ENCODE measurements at regions of chr11 and their contacts with region 1.

Region 1: DNA sequence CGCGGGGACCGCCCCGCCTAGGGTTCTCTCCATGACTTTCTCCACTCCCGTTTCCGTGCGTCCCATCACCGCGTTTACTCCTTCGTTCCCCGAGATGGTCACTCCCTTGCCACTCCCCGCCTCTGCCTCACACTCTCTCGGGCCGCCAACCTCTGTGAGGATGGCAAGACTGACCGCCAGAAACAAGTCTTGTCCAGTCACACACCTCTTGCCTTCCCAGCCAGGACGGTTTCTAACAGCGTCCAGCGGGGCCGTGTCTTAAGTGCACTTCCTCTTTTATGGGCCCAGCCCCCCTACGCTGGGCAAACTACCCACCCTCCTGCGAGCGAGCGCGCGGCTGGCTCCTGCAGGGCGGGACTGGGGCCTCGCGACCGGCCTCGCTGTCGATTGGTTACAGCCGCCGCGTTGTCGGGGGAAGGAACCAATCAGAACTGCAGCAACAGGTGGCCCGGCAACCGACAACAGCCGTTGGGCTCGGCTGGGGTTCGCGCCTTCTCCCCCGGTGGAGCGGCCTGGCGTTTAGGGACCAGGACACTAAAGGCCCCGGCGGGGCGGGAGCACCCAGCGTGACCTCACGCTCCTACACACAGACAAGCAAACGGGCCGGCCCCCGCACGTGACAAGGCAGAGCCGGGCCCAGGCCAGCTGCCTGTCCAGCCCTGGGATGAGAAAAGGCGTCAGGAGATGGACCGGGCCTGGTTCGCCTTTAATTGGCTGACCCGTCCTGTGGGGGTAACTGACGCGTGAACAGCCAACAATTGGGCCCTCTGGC is 512 bp upstream of the UCP2 start:
- DNase-seq: peak; percentile 89 to 97 (median 95)

Region 2: GRCh38 chr11:73743045-73743444 is 240.1 kb before region 1 on chr11:
- intact Hi-C with region 1: no loop called
- DNase-seq: no peak

Region 3: DNA sequence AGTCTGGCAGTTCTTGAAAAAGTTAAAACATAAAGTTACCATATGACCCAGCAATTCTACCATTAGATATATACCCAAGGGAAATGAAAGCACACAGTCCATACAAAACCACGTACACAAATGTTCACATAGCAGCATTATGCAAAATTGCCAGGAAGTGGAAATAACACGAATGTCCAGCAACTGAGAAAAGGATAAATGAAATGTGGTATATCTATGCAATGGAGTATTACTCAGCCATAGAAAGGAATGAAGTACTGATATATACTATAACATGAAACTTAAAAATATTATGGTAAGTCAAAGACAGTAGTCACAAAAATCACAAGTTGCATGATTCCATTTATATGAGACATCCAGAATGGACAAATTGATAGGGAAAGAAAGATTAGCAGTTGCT is 129.7 kb after region 1 on chr11:
- intact Hi-C with region 1: no loop called
- DNase-seq: no peak

Region 4: DNA sequence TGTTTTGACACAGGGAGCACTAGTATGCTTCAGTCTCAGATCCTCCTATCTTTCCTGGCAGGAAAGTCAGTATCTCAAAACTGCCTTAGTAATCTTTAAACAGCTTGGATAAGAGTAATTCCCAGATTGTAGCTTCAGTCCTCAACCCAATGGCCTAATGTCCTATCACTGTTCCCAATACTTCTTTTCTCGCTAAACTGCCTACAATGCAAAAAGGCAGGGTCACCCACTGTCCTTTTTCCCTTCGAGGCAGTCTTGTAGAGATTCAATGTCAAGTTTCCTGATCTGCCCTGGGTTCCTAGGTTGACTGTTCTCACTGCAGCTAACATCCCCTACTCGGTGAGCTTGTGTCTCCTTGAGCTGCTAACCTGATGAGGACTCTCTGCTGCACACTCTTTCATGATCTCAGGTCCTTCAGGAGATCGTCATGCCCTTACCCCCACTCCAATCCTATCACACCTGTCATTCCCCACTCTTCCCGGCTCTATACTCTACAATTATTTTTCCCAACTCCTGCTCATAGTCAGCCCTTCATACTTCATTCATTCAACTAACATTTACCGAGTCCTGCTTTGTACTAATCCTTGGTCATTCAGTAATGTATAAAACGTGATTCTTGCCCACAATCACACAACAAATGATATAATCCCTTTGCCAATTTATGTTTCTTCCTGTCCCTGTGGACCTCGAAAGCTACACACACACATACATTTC is 186.7 kb after region 1 on chr11:
- intact Hi-C with region 1: loop called (anchors 5 kb)
- DNase-seq: no peak